AG04450 (cell line): ENCODE measurements at regions of chr6 and their contacts with region 1.

Region 1: DNA sequence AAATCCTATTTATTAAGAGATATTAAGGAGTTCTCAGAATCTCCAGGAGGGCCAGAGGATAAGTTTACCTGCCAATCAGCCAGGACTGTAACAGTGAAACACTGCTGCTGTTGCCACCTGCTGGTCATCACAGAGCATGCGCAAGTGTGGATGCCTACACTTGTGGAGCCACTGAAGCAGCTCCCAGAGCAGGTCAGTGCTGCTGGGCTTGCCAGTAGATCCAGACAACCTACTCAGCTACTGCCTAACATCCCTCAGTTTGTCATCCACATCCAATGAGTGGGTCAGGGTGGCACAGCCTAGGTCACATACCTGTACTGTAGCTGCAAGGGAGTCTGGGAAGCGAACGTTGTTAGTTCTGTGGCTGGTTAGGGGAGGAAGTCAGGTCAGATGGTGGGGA is 18.3 kb upstream of the NHSL1 start:
- DNase-seq: no peak
- H3K4me3 ChIP-seq: no peak overlapping the region
- H3K27ac ChIP-seq: no peak overlapping the region
- H3K27me3 ChIP-seq: no peaks in the 10 kb centered on the region
- CTCF ChIP-seq: peak; percentile 59

Region 2: GRCh38 chr6:138428944-138429598 is 88.6 kb before region 1 on chr6:
- CTCF ChIA-PET with region 1: interaction called, 33 read pairs
- POLR2A ChIA-PET with region 1: no interaction called
- DNase-seq: peak; percentile 41
- H3K4me3 ChIP-seq: no peak overlapping the region
- H3K27ac ChIP-seq: no peak overlapping the region
- H3K27me3 ChIP-seq: no peaks in the 10 kb centered on the region
- CTCF ChIP-seq: peak; percentile 62

Region 3: GRCh38 chr6:138499303-138500018 is 18.2 kb before region 1 on chr6 and contains the start of gene NHSL1:
- CTCF ChIA-PET with region 1: interaction called, 10 read pairs
- POLR2A ChIA-PET with region 1: no interaction called
- DNase-seq: no peak
- H3K4me3 ChIP-seq: no peak within 1 kb of the TSS
- H3K27ac ChIP-seq: no peak within 1 kb of the TSS
- H3K27me3 ChIP-seq: no peaks in the 10 kb centered on the region
- CTCF ChIP-seq: no peak
- polyA plus RNA-seq, gene NHSL1: 10.2 and 10.5 TPM in 2 replicates

Region 4: DNA sequence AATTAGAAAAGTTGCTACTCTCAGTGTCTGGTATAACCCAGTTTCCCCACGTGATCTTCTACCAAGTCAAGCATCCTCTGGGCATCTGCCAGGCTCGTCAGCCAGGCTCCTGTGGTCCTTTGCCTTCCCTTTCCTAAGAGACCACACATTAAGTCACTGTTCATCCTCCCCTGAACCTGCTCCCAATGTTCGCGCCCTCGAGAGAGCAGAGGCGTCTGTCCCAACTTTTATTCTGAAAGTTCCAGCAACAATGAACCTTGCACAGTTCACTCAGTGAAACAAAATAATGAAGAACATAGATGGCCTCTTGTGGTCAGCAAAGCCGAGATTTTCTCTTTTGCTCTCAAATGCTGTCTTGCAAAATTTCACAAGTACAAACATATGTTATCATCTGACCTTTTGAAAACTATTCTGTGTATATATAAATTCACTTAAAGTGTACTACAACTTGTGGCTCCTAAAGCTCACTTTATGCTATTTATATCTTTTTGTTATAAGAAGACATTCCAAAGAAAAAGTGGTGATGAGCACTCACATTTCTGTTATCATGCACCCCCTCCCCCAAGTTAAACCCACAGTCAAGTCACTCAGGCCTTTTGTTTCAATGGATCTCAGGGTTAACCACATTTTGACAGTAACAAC is 20.9 kb after region 1 on chr6:
- CTCF ChIA-PET with region 1: interaction called, 21 read pairs
- POLR2A ChIA-PET with region 1: no interaction called
- DNase-seq: peak; percentile 69
- H3K4me3 ChIP-seq: peak overlapping the region; percentile 20
- H3K27ac ChIP-seq: peak overlapping the region; percentile 90
- H3K27me3 ChIP-seq: no peaks in the 10 kb centered on the region
- CTCF ChIP-seq: no peak

Region 5: GRCh38 chr6:138631566-138631965 is 113.9 kb after region 1 on chr6:
- CTCF ChIA-PET with region 1: no interaction called
- POLR2A ChIA-PET with region 1: no interaction called
- DNase-seq: no peak
- H3K4me3 ChIP-seq: no peak overlapping the region
- H3K27ac ChIP-seq: no peak overlapping the region
- H3K27me3 ChIP-seq: no peaks in the 10 kb centered on the region
- CTCF ChIP-seq: no peak